ENCODE measurements at regions of chr6 and their contacts with region 1.

Region 1: DNA sequence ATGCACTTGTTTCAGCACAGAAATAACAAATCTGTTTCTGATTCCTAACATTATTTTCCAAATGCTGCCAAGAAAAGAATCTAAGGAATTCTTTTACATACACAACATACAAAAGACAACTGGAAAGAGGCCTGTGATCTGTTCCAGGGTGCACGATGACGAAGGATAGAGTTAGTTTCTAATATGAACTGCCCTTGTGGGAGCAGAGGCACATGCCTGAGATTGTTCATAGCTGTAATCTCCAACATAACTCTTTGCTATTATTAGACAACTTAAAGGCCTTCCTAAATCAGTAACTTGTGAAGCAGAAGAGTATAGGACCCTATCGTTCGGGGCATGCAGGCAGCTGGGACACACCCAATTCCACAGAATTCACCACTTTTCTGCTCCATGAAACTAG is 41.2 kb upstream of the NHSL1 start:
- DNase-seq: no peak
- H3K4me3 ChIP-seq: no peak overlapping the region
- H3K27ac ChIP-seq: no peak overlapping the region
- H3K4me1 ChIP-seq: peaks cover 61% of the 10 kb centered on the region
- H3K27me3 ChIP-seq: no peaks in the 10 kb centered on the region
- CTCF ChIP-seq: no peak

Region 2: DNA sequence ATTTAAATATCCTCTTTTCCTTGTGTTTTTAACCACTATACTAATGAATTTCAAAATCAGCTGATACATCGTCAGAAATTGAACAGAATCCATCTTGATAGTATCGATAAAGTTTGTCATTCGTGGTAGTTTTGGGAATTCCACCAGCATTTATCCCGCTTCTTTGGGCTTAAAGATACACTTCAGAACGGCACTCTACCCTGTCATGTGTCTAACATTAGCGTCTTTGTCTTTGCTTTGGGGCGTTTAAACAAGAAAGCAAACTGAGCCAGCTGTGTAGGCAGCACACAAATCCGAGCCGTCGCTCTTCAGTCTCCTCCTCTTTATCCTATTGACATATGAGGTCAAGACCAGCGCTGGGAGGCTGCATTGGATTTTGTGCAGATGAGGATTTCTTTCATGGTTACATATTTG is 13.6 kb before region 1 on chr6:
- CTCF ChIA-PET with region 1: no interaction called
- POLR2A ChIA-PET with region 1: interaction called, 4 read pairs
- intact Hi-C with region 1: loop called (anchors 2 kb)
- DNase-seq: peak; percentile 50
- H3K4me3 ChIP-seq: peak overlapping the region; percentile 36
- H3K27ac ChIP-seq: peak overlapping the region; percentile 36
- H3K4me1 ChIP-seq: peaks cover 53% of the 10 kb centered on the region
- H3K27me3 ChIP-seq: no peaks in the 10 kb centered on the region
- CTCF ChIP-seq: no peak

Region 3: GRCh38 chr6:138631566-138631965 is 91.1 kb after region 1 on chr6:
- CTCF ChIA-PET with region 1: no interaction called
- POLR2A ChIA-PET with region 1: no interaction called
- intact Hi-C with region 1: no loop called
- DNase-seq: no peak
- H3K4me3 ChIP-seq: no peak overlapping the region
- H3K27ac ChIP-seq: no peak overlapping the region
- H3K4me1 ChIP-seq: no peaks in the 10 kb centered on the region
- H3K27me3 ChIP-seq: no peaks in the 10 kb centered on the region
- CTCF ChIP-seq: no peak